ENCODE measurements at regions of chr1 and their contacts with region 1.

Region 1: GRCh38 chr1:154955718-154956543 is at the start of gene PBXIP1:
- DNase-seq: peak; percentile 89
- H3K4me3 Mint-ChIP-seq: peak within 1 kb of the TSS; percentile 80
- H3K27ac Mint-ChIP-seq: peak within 1 kb of the TSS; percentile 70
- H3K4me1 Mint-ChIP-seq: peaks cover 39% of the 10 kb centered on the region
- H3K27me3 Mint-ChIP-seq: no peaks in the 10 kb centered on the region
- CTCF ChIP-seq: peak; percentile 23
- total RNA-seq, gene PBXIP1: 48.1 and 49.6 TPM in 2 replicates

Region 2: DNA sequence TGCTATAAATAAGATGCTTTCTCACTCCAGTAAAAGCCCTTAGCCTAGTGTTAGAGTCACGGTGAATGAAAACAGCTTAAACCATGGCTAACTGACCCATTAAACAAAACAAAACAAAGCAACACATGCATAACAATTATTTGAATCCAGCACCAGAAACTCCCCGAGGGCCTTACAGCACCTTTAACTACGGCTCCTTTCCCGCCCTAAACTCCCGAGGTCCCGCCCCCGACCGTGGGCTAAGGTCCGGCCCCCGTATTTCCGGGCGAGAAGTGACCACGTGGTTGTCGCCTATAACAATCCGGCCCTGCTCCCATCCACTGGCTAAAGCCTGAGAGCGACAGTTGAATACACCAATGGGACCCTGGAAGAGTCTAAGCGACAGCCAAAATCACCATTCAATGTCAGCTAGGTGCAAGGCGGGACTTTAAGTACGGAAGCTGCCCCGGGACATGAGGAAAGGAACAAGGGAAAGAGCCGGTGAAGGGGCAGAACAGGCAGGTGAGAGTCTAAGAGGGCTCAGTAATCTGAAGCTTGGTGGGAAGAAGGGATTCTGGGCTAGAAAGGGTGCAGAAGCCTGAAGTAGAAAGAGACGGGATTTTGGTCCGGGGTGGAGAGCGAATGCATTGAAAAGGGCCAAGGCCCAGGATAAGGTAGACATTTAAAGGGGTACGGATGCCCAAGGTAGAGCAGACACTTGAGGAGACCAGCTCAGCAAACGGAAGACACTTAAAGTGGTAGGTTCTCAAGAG is 27.1 kb after region 1 on chr1 and contains the start of gene FLAD1:
- CTCF ChIA-PET with region 1: interaction called, 10 read pairs
- intact Hi-C with region 1: no loop called
- DNase-seq: peak; percentile 99
- H3K4me3 Mint-ChIP-seq: no peak within 1 kb of the TSS
- H3K27ac Mint-ChIP-seq: no peak within 1 kb of the TSS
- H3K4me1 Mint-ChIP-seq: peaks cover 7% of the 10 kb centered on the region
- H3K27me3 Mint-ChIP-seq: no peaks in the 10 kb centered on the region
- CTCF ChIP-seq: no peak
- total RNA-seq, gene FLAD1: 74.3 and 75.1 TPM in 2 replicates

Region 3: DNA sequence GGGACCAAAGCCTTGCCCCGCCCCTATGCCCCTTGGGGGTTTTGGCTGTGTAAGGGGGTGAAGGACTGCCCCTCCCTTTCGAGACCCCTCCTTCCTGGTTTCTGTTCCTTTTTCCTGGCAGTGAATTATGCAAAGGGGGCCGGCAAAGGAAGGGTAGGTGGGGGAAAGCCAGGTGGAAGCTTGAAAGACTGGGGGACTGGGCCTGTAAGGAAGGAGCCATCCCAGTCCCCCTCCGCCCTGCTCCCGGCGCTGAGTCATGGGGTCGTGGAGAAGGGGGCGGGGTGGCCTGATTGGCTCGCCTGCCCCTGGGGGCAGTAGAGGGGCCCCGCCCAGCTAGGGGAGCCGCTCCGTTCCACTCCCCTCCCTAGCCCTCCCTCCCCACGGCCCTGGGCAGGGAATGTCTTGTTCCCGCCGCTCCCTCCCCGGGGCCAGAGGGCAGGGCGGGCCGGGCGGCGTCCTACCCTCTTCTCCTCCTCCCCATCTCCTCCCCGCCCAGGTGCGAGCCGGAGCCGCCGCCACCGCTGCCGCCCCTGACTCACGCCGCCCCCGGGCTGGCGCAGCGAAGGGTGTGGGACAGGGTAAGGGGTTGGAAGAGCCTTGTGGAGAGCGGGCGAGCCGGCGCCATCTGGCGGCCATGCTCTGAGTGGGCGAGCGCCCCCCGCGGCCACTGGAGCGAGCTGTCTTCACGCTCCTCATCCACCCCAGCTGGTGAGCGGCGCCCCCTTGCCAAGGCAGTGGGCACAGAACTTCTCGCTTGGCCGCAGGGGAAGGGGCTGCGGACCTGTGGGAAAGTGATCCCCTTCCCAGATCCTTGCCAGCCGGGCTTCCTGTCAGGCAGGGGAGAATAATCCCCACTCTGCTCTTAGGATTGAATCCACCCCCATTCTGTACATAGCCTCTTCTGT is 61.4 kb after region 1 on chr1:
- CTCF ChIA-PET with region 1: interaction called, 10 read pairs
- intact Hi-C with region 1: no loop called
- DNase-seq: peak; percentile 96
- H3K4me3 Mint-ChIP-seq: peak overlapping the region; percentile 60
- H3K27ac Mint-ChIP-seq: peak overlapping the region; percentile 79
- H3K4me1 Mint-ChIP-seq: peaks cover 37% of the 10 kb centered on the region
- H3K27me3 Mint-ChIP-seq: no peaks in the 10 kb centered on the region
- CTCF ChIP-seq: peak; percentile 99

Region 4: DNA sequence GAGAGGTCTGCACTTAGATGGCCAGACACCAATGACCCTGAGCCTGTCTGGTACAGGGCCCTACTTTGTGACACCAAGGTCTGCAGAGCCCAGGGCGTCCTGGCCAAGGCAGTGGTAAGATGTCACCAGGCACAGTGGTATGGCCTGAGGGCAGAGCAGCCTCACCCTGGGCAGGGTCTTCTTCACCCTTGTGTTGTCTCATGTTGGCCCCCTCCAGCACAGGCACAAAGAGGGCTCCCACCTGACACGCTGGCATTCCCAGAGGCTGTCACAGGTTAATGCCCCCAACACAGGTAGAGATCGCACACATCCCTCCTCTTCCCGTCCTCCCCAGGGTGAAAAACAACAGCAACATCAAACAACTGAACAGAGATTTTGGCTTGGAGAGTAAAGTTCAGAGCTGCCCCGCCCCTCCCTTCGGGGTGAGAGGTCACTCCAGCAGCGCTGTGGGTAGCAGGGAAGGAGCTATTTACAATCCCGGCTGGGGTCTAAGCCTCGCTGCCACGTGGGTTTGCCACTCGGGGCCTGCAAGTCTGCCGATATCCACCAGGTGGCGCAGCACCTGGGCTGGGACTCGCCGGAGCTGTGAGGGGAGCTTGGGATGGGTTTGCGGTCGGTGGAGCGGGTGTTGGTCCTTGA is 135.3 kb after region 1 on chr1:
- CTCF ChIA-PET with region 1: no interaction called
- intact Hi-C with region 1: no loop called
- DNase-seq: peak; percentile 91
- H3K4me3 Mint-ChIP-seq: peak overlapping the region; percentile 29
- H3K27ac Mint-ChIP-seq: no peak overlapping the region
- H3K4me1 Mint-ChIP-seq: peaks cover 10% of the 10 kb centered on the region
- H3K27me3 Mint-ChIP-seq: peaks cover 21% of the 10 kb centered on the region
- CTCF ChIP-seq: peak; percentile 97